Astrocyte of the cerebellum (primary cell): ENCODE measurements at regions of chr22 and their contacts with region 1.

Region 1: DNA sequence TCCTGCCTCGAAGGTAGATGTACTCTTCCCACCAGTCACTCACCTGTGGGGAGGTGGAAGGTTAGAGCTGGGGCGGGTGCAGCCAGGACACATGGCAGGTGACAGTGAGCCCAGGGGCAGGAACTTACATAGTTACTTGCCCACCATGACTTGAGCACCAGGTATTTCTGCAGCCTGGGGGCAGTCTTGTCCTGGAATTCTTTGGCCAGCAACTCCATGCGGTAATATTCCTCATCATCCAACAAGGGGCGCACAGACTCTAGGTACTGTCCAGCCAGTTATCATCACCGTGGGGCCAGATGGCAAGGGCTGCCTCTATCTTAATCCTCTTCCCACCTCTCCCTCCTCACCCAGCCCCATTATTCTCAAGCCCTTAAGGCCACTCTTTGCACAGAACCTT is 2.2 kb downstream of the CPT1B start:
- DNase-seq: peak; percentile 19
- H3K4me3 ChIP-seq: no peak overlapping the region
- CTCF ChIP-seq: peak; percentile 40

Region 2: DNA sequence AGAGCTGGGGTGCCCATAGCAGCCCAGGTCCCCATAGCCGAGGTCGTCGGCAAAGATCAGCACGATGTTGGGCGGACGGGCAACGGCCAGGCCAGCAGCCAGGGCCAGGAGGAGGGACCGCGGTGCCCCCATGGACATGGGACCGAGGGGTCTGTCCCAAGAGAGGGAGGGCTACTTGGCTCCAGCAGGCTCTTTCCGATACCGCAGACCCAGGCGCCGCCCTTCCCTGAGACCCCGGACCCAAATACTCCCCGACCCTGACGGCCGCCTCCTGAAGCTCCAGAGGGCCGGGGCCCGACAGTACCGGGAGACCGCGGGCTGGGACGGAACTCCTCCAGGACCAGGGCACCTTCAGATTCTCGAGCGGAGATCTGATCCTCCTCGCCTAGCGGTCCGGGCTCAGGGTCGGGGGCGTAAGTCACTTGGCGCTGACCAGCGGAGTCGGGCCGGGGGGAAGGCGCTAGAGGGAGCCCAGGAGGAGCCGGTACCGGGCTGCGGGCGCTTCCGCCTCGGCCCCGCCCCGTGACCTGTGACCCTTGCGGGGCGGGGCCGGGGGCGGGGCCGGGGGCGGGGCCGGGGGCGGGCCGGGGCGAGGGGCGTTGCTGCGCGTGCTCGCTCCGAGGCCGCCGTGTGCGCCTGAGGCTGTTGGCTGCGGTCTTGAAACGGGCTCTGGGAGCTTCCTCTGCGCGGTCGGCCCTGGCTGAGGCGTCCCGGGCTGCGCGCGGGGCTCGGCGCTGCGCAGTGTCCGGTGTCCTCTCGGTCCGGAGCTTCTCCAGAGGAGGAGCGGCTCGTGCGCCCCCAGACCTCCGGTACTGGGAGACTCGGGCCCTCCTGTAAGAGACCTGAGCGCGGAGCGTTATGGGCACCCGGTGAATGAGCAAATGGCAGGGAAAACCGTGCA is 51.8 kb after region 1 on chr22 and contains the start of gene ARSA:
- in situ Hi-C with region 1: loop called (anchors 5 kb)
- DNase-seq: peak; percentile 38
- H3K4me3 ChIP-seq: peak within 1 kb of the TSS; percentile 83
- CTCF ChIP-seq: peak; percentile 19

Region 3: DNA sequence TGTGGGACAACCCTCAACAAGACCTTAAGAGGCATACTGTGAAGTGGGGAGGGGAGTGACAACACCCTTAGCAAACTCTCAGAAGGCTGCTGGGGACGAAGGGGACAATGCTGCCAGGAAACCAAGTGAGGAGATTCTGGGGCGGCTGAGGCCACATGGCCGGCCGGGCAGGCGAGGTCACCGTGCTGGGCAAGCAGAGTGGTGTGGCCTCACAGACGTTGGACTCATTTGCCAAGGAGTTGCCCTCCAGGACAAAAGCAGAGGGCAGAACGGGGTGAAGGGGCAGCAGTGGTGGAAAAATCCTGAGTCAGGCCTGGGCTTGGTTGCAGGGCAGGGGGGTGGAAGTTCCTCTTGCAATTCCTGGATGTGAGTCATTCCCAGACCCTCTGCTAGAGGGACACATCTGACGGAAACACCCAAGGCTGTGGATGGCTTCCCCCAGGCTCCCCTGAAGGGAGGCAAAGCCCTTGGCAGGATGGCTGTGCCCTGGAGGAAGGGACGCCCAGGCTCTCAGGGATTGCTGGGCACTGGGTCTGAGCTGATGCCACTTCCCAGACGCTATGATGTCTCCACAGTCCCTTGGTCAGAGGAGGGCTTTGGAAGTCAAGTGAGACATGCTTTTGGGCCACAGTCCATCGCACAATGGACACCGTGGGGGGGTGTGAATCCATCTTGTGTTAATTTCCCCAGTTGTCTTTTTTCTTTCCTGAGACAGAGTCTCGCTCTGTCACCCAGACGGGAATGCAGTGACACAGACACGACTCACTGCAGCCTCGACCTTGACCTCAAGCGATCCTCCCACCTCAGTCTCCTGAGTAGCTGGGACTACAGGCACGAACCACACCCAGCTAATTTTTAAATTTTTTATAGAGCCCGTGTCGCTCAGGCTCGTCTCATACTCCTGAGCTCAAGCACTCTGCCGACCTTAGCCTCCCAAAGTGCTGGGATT is 80.3 kb after region 1 on chr22:
- in situ Hi-C with region 1: no loop called
- DNase-seq: no peak
- H3K4me3 ChIP-seq: no peak overlapping the region
- CTCF ChIP-seq: no peak